ENCODE measurements at regions of chr6 and their contacts with region 1.

Region 1: DNA sequence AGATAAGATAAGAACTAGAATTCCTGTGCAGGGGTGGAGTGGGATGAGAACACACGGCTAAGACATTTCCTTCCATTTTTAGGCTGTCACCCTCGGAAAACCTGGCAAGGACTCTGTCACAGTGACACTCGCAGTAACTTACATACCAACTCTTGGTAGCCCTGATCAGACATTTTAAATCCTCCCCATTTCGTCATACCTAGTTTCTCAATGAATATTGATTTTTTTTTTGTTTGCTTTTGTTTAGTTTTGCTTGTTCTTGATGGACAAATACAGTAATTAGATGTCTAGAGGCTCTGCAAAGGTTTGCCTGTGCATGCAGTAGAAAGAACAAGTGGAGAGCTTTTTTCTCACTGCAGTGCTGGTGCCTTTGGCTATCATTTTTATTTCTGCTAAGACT is 213.0 kb upstream of the FAM83B start:
- DNase-seq: no peak
- H3K4me3 ChIP-seq: no peak overlapping the region
- H3K27ac ChIP-seq: no peak overlapping the region
- H3K4me1 ChIP-seq: no peaks in the 10 kb centered on the region
- H3K27me3 ChIP-seq: no peaks in the 10 kb centered on the region
- CTCF ChIP-seq: no peak
- EP300 ChIP-seq: no peak
- POLR2A ChIP-seq: no peak

Region 2: DNA sequence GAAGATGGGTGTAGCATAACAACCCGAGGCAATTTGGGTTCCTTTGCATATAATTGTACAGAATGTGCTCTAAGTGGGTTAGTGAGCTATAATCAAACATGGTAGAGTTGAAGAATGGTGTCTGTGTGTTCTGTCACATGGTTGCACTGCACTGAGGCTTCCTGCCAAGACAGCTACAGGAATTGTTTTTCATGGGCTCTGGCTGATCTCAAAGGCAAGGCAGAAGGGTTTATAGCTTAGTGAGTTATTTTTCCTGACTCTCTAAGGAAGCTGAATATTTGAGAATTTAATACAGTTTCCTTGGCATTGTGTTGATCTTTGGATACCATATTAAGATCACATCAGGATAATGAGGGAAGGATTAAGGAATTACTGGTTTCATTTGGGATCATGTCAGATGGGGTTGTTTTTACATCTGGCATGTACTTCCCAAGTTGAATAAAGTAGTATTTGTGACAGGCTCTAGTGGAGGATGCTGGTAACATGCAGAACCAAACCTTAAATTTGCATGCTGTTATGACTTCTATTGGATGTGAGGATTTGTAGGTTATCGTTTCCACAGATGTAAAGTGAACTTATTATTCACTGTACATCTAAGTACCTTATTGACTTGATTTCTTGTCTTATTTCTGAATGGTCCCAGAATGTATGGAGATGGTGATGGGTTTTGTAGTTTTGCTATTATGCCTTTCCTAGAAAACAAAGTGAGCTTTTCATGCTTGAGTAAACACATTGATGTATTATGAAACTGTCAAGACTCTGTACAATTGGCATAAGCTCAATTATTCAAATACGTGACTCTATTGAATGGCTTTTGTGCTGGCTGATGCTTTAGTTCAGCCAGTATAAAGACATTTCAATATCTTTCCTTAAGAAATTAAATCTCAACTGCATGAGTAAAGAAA is 795.5 kb before region 1 on chr6:
- in situ Hi-C with region 1: no loop called
- intact Hi-C with region 1: loop called (anchors 5 kb)
- DNase-seq: no peak
- H3K4me3 ChIP-seq: no peak overlapping the region
- H3K27ac ChIP-seq: peak overlapping the region in 3 of 4 donors; percentile 29 to 66 (median 50)
- H3K4me1 ChIP-seq: peaks cover 0 to 29% (median 3%) of the 10 kb centered on the region in 4 donors
- H3K27me3 ChIP-seq: no peaks in the 10 kb centered on the region
- CTCF ChIP-seq: peak in 2 of 5 experiments; percentile 8 to 29
- EP300 ChIP-seq: no peak
- POLR2A ChIP-seq: no peak

Region 3: GRCh38 chr6:55047451-55048044 is 413.9 kb after region 1 on chr6:
- in situ Hi-C with region 1: no loop called
- intact Hi-C with region 1: no loop called
- DNase-seq: no peak
- H3K4me3 ChIP-seq: no peak overlapping the region
- H3K27ac ChIP-seq: no peak overlapping the region
- H3K4me1 ChIP-seq: no peaks in the 10 kb centered on the region
- H3K27me3 ChIP-seq: no peaks in the 10 kb centered on the region
- CTCF ChIP-seq: no peak
- EP300 ChIP-seq: no peak
- POLR2A ChIP-seq: no peak